Naive thymus-derived CD4-positive, alpha-beta T cell (primary cell): ENCODE measurements at regions of chr1 and their contacts with region 1.

Region 1: GRCh38 chr1:174159252-174160108 is at the start of gene RABGAP1L:
- DNase-seq: peak; percentile 87 to 95 (median 93)
- ATAC-seq: peak; percentile 96
- H3K4me3 ChIP-seq: peak within 1 kb of the TSS; percentile 72
- H3K4me3 Mint-ChIP-seq: peak within 1 kb of the TSS; percentile 92 to 100 (median 96)
- H3K27ac ChIP-seq: peak within 1 kb of the TSS; percentile 87
- H3K27ac Mint-ChIP-seq: peak within 1 kb of the TSS; percentile 86 to 98 (median 98)
- H3K4me1 ChIP-seq: peaks cover 9 to 20% of the 10 kb centered on the region in 2 donors
- H3K4me1 Mint-ChIP-seq: peaks cover 31 to 59% (median 53%) of the 10 kb centered on the region in 7 donors
- H3K27me3 ChIP-seq: no peaks in the 10 kb centered on the region
- H3K27me3 Mint-ChIP-seq: no peaks in the 10 kb centered on the region
- total RNA-seq, gene RABGAP1L: 51.9 to 97.4 (median 74.3) TPM

Region 2: GRCh38 chr1:173476664-173477285 is 682.7 kb before region 1 on chr1:
- CTCF ChIA-PET with region 1: no interaction called
- POLR2A ChIA-PET with region 1: no interaction called
- intact Hi-C with region 1: loop called (anchors 1 kb)
- DNase-seq: peak; percentile 65 to 82 (median 78)
- ATAC-seq: peak; percentile 87
- H3K4me3 ChIP-seq: peak overlapping the region; percentile 92
- H3K4me3 Mint-ChIP-seq: peak overlapping the region; percentile 82 to 94 (median 91)
- H3K27ac ChIP-seq: peak overlapping the region; percentile 78
- H3K27ac Mint-ChIP-seq: peak overlapping the region; percentile 61 to 96 (median 89)
- H3K4me1 ChIP-seq: peaks cover 20 to 31% of the 10 kb centered on the region in 2 donors
- H3K4me1 Mint-ChIP-seq: peaks cover 38 to 72% (median 63%) of the 10 kb centered on the region in 7 donors
- H3K27me3 ChIP-seq: no peaks in the 10 kb centered on the region
- H3K27me3 Mint-ChIP-seq: no peaks in the 10 kb centered on the region

Region 3: DNA sequence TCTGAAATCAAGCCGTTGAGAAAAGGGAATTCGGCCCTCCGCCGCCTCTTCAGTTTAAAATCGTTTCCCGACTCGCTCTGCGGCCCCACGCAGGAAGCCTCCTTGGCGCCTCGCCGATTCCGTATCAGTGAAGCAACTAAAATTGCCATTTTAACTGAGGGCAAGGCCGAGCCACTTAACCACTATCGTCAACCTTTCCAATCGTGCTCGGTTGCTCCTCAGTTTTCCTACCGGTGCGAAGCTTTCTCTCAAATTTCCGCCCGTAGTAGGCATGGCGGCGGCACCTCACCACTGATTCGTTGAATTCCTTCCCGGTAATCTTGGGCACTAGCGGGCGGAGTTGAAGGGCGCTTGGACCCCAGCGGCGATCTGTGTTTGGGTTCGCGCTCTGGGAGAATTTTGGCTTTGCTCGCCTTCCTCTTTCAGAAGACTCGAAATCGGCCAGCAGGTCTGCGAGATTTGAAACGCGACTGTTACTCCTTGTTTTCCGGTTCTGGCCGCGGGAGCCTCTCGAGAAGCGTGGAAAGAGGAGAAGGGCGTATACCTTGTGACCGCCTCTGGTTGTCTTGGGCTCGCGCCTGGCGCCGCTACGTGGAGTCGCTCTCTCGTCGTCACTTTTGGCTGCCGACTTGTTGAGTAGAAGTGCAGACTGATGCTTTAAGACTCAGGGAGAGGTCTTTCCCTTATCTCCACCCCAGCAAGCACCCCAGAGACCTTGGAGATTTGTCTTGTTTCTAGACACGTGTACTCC is 335.0 kb before region 1 on chr1 and contains the starts of genes CENPL and DARS2:
- CTCF ChIA-PET with region 1: no interaction called
- POLR2A ChIA-PET with region 1: no interaction called
- intact Hi-C with region 1: loop called (anchors 1 kb)
- DNase-seq: peak; percentile 67 to 93 (median 91)
- ATAC-seq: peak; percentile 94
- H3K4me3 ChIP-seq: peak within 1 kb of the TSS; percentile 99
- H3K4me3 Mint-ChIP-seq: peak within 1 kb of the TSS; percentile 87 to 99 (median 94)
- H3K27ac ChIP-seq: peak within 1 kb of the TSS; percentile 80
- H3K27ac Mint-ChIP-seq: peak within 1 kb of the TSS; percentile 91 to 98 (median 96)
- H3K4me1 ChIP-seq: peaks cover 10 to 14% of the 10 kb centered on the region in 2 donors
- H3K4me1 Mint-ChIP-seq: peaks cover 32 to 68% (median 50%) of the 10 kb centered on the region in 7 donors
- H3K27me3 ChIP-seq: no peaks in the 10 kb centered on the region
- H3K27me3 Mint-ChIP-seq: no peaks in the 10 kb centered on the region
- total RNA-seq, gene CENPL: 5.2 to 25.1 (median 9.5) TPM
- total RNA-seq, gene DARS2: 3.6 to 26.0 (median 13.5) TPM

Region 4: GRCh38 chr1:174022080-174022975 is 137.2 kb before region 1 on chr1 and contains the start of gene RC3H1:
- CTCF ChIA-PET with region 1: no interaction called
- POLR2A ChIA-PET with region 1: interaction called, 9 read pairs
- intact Hi-C with region 1: loop called (anchors 1 kb)
- DNase-seq: peak; percentile 75 to 89 (median 83)
- ATAC-seq: peak; percentile 97
- H3K4me3 ChIP-seq: peak within 1 kb of the TSS; percentile 86
- H3K4me3 Mint-ChIP-seq: peak within 1 kb of the TSS; percentile 85 to 100 (median 98)
- H3K27ac ChIP-seq: peak within 1 kb of the TSS; percentile 94
- H3K27ac Mint-ChIP-seq: peak within 1 kb of the TSS; percentile 90 to 99 (median 98)
- H3K4me1 ChIP-seq: peaks cover 24 to 32% of the 10 kb centered on the region in 2 donors
- H3K4me1 Mint-ChIP-seq: peaks cover 19 to 52% (median 49%) of the 10 kb centered on the region in 7 donors
- H3K27me3 ChIP-seq: no peaks in the 10 kb centered on the region
- H3K27me3 Mint-ChIP-seq: peaks cover 0 to 5% (median 0%) of the 10 kb centered on the region in 5 donors
- total RNA-seq, gene RC3H1: 36.5 to 49.5 (median 47.7) TPM

Region 5: DNA sequence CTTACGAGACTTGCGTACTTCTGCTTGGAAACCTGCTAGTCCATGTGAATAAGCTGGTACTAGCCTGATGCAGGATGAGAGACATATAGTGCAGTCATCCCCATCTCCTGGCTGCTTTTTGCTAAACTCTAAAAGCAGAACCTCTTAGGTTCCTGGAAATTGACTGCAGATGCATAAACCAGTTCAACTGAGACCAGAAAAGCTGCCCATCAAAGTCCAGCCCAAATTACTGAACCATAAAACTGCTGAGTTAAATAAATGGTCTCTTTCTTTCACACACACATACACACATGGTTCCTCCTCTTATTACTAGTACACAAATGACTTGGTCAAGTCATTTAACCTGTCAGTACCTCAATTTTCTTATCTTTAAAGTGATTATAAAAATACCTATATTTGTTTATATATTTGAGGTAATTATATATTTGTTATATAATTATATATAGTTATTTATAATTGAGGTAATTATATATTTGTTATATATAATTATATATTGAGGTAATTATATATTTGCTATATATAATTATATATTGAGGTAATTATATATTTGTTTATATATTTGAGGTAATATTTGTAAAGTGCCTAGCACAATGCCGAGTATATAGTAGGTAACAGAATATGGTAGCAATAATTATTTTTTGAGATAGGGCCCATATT is 25.3 kb before region 1 on chr1:
- CTCF ChIA-PET with region 1: no interaction called
- POLR2A ChIA-PET with region 1: no interaction called
- intact Hi-C with region 1: no loop called
- DNase-seq: no peak
- ATAC-seq: no peak
- H3K4me3 ChIP-seq: no peak overlapping the region
- H3K4me3 Mint-ChIP-seq: no peak overlapping the region
- H3K27ac ChIP-seq: no peak overlapping the region
- H3K27ac Mint-ChIP-seq: no peak overlapping the region
- H3K4me1 ChIP-seq: no peaks in the 10 kb centered on the region
- H3K4me1 Mint-ChIP-seq: no peaks in the 10 kb centered on the region
- H3K27me3 ChIP-seq: no peaks in the 10 kb centered on the region
- H3K27me3 Mint-ChIP-seq: peaks cover 0 to 12% (median 5%) of the 10 kb centered on the region in 5 donors

Region 6: DNA sequence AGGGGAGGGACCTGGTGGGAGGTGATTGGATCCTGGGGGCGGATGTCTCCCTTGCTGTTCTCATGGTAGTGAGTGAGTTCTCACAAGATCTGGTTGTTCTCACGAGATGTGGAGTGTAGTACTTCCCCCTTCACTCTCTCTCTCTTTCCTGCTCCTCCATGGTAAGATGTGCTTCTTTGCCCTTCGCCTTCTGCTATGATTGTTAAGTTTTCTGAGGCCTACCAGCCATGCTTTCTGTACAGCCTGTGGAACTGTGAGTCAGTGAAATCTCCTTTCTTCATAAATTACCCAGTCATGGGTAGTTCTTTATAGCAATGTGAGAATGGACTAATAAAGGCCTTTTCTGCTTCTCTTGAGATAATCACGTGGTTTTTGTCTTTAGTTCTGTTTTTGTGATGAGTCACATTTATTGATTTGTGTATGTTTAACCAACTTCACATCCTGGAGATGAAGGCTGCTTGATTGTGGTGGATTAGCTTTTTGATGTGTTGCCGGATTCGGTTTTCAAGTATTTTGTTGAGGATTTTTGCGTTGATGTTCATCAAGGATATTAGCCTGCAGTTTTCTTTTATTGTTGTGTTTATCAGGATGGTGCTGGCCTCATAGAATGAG is 45.3 kb after region 1 on chr1:
- CTCF ChIA-PET with region 1: no interaction called
- POLR2A ChIA-PET with region 1: no interaction called
- intact Hi-C with region 1: loop called in 1 of 2 experiments (anchors 2 kb)
- DNase-seq: no peak
- ATAC-seq: peak; percentile 46
- H3K4me3 ChIP-seq: no peak overlapping the region
- H3K4me3 Mint-ChIP-seq: peak overlapping the region in 3 of 10 donors; percentile 2 to 13 (median 3)
- H3K27ac ChIP-seq: no peak overlapping the region
- H3K27ac Mint-ChIP-seq: peak overlapping the region in 3 of 9 donors; percentile 4 to 51 (median 12)
- H3K4me1 ChIP-seq: peaks cover 16 to 21% of the 10 kb centered on the region in 2 donors
- H3K4me1 Mint-ChIP-seq: peaks cover 32 to 65% (median 42%) of the 10 kb centered on the region in 7 donors
- H3K27me3 ChIP-seq: no peaks in the 10 kb centered on the region
- H3K27me3 Mint-ChIP-seq: no peaks in the 10 kb centered on the region